Endothelial cell of umbilical vein (primary cell): ENCODE measurements at regions of chr14 and their contacts with region 1.

Region 1: DNA sequence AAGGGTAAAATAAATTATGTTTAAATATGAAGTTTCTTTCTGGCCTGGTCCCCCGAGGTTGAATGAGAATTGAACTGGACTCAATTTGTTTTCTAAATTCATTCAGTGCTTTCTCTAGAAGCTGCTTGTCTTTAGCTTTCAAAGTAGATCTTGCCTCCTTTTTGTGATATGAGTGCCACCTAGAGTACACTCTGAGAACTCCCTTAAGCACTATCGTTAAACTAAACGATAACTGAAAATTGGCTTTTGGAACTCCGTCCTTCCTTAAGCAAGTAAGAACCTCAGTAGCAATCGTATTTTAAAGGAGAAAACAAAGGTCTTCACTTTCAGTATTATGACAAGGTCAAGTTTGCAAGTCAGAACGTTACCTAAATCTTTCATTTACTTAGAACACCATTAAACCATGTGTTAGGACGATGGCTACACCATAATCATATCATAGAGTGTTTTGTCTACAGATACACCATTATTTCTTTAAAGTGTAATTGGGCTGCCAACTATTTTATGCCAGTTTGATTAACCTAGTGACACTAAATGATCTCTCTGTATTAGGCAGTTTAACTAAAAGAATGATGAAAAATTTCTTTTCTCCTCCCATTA is 364.8 kb downstream of the SNAPC1 start:
- DNase-seq: peak; percentile 75
- H3K4me3 ChIP-seq: no peak overlapping the region
- H3K27ac ChIP-seq: no peak overlapping the region
- H3K4me1 ChIP-seq: no peaks in the 10 kb centered on the region
- H3K27me3 ChIP-seq: peaks cover 42 to 66% of the 10 kb centered on the region in 2 experiments
- CTCF ChIP-seq: peak; percentile 44 to 63
- POLR2A ChIP-seq: no peak

Region 2: DNA sequence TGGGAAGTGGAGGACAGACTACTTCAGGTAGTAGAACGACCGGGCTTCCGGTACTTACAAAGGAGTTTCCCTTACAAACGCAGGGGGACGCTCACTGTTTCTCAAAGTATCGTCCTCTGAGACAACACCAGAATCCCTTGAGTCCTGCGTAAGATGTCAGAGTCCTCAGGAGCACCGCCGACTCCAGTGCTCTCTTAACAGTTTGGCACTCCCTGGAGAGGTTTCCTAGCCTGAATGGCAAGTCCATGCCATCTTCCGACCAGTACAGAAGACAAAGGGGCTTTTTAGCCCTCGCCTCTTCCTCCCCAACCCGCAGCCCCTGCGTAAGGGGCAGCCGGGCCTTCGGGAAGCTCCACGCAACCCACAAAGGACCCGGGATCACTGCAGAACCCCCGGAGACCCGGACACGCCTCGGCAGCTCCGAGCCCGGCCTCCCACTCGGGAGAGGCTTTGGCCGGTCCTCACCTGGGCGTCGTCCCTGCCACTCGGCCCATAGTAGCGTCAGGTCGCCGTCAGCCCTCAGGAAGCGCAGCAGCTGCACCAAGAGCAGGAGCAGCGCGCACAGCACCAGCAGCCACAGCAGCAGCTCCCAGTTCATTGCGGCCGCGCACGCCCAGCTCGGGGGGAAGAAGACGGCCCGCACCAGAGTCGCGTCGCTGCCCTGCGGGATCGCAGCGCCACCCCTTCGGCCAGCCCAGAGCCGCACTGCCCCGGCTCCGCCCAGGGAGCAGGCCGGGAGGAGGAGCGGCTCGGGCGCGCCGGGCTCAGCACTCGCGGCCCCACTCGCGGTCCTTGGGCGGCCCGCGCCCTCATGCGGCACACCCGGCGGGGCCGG is 1962.0 kb before region 1 on chr14 and contains the start of gene DHRS7:
- CTCF ChIA-PET with region 1: no interaction called
- POLR2A ChIA-PET with region 1: interaction called, 14 read pairs
- dilution Hi-C with region 1: no loop called
- intact Hi-C with region 1: no loop called
- DNase-seq: peak; percentile 82
- H3K4me3 ChIP-seq: peak within 1 kb of the TSS; percentile 46 to 84 (median 79)
- H3K27ac ChIP-seq: peak within 1 kb of the TSS; percentile 22
- H3K4me1 ChIP-seq: peaks cover 10% of the 10 kb centered on the region
- H3K27me3 ChIP-seq: no peaks in the 10 kb centered on the region
- CTCF ChIP-seq: peak; percentile 12 to 21
- POLR2A ChIP-seq: peak; percentile 59
- total RNA-seq, gene DHRS7: 29.3 and 35.7 TPM in 2 replicates

Region 3: GRCh38 chr14:61461808-61462275 is 665.1 kb before region 1 on chr14:
- CTCF ChIA-PET with region 1: interaction called, 40 read pairs
- POLR2A ChIA-PET with region 1: no interaction called
- dilution Hi-C with region 1: no loop called
- intact Hi-C with region 1: loop called (anchors 1 kb)
- DNase-seq: peak; percentile 80
- H3K4me3 ChIP-seq: no peak overlapping the region
- H3K27ac ChIP-seq: no peak overlapping the region
- H3K4me1 ChIP-seq: peaks cover 26% of the 10 kb centered on the region
- H3K27me3 ChIP-seq: no peaks in the 10 kb centered on the region
- CTCF ChIP-seq: peak; percentile 35 to 43
- POLR2A ChIP-seq: no peak

Region 4: GRCh38 chr14:61822458-61822857 is 304.5 kb before region 1 on chr14:
- CTCF ChIA-PET with region 1: no interaction called
- POLR2A ChIA-PET with region 1: no interaction called
- dilution Hi-C with region 1: no loop called
- intact Hi-C with region 1: no loop called
- DNase-seq: no peak
- H3K4me3 ChIP-seq: no peak overlapping the region
- H3K27ac ChIP-seq: no peak overlapping the region
- H3K4me1 ChIP-seq: no peaks in the 10 kb centered on the region
- H3K27me3 ChIP-seq: peaks cover 6% of the 10 kb centered on the region in 2 experiments
- CTCF ChIP-seq: no peak
- POLR2A ChIP-seq: no peak

Region 5: DNA sequence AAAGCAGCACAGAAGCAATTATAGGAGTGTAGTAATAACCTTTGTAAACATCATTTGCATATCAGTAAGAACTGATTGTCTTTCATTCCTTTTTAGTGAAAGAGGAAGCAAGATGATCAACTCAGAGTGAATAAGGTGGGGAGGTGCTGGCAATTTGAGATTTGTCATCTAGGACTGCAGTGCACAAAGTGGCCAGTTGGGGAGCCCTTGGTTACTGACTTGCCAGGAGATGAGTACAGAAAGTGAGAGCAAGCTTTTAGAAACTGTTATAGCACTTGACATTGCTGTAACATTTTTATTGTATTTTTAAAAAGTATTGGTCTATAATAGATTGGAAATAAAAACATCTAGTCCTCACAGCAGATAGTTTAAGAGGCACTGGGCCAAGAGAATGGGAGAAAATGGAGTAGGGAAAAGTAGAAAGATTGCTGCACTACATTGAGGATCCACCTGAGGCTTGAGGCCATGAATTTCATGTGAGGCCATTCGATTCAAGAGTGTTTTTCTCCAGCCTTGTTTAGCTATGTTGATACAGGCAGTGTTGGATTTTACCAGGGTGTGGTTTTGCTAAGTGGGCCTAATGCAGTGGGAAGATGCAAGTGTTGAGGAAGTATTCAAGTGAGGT is 266.6 kb before region 1 on chr14:
- CTCF ChIA-PET with region 1: interaction called, 13 read pairs
- POLR2A ChIA-PET with region 1: no interaction called
- dilution Hi-C with region 1: no loop called
- intact Hi-C with region 1: no loop called
- DNase-seq: peak; percentile 55
- H3K4me3 ChIP-seq: no peak overlapping the region
- H3K27ac ChIP-seq: no peak overlapping the region
- H3K4me1 ChIP-seq: no peaks in the 10 kb centered on the region
- H3K27me3 ChIP-seq: peaks cover 12 to 25% of the 10 kb centered on the region in 2 experiments
- CTCF ChIP-seq: peak; percentile 58 to 71
- POLR2A ChIP-seq: no peak

Region 6: DNA sequence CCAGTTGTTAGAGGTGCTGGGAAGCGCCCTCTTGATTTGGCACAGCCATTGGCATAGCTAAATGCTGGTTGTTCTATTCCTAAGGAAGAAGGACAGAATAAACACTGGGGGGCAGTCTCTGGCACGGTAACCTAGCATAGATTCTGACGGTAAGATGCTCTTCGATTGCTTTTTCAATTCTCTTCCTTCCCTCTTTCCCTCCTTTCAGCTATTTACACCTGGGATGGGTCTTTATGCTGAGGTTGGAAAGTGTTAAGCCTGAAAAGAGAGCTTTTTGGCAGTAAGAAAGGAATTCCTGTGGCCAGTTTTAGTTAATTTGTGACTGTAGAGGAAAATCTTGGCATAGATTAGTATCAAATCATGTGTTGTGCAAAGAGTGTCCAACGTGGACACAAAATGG is 201.9 kb before region 1 on chr14:
- CTCF ChIA-PET with region 1: interaction called, 22 read pairs
- POLR2A ChIA-PET with region 1: no interaction called
- dilution Hi-C with region 1: no loop called
- intact Hi-C with region 1: loop called (anchors 1 kb)
- DNase-seq: peak; percentile 6
- H3K4me3 ChIP-seq: no peak overlapping the region
- H3K27ac ChIP-seq: no peak overlapping the region
- H3K4me1 ChIP-seq: no peaks in the 10 kb centered on the region
- H3K27me3 ChIP-seq: peaks cover 7 to 24% of the 10 kb centered on the region in 2 experiments
- CTCF ChIP-seq: peak in 1 of 2 donors; percentile 5
- POLR2A ChIP-seq: no peak

Region 7: GRCh38 chr14:62289471-62289870 is 162.5 kb after region 1 on chr14:
- CTCF ChIA-PET with region 1: no interaction called
- POLR2A ChIA-PET with region 1: no interaction called
- dilution Hi-C with region 1: no loop called
- intact Hi-C with region 1: no loop called
- DNase-seq: no peak
- H3K4me3 ChIP-seq: no peak overlapping the region
- H3K27ac ChIP-seq: no peak overlapping the region
- H3K4me1 ChIP-seq: no peaks in the 10 kb centered on the region
- H3K27me3 ChIP-seq: no peaks in the 10 kb centered on the region
- CTCF ChIP-seq: no peak
- POLR2A ChIP-seq: no peak